Endothelial cell of umbilical vein (primary cell): ENCODE measurements at regions of chr16 and their contacts with region 1.

Region 1: DNA sequence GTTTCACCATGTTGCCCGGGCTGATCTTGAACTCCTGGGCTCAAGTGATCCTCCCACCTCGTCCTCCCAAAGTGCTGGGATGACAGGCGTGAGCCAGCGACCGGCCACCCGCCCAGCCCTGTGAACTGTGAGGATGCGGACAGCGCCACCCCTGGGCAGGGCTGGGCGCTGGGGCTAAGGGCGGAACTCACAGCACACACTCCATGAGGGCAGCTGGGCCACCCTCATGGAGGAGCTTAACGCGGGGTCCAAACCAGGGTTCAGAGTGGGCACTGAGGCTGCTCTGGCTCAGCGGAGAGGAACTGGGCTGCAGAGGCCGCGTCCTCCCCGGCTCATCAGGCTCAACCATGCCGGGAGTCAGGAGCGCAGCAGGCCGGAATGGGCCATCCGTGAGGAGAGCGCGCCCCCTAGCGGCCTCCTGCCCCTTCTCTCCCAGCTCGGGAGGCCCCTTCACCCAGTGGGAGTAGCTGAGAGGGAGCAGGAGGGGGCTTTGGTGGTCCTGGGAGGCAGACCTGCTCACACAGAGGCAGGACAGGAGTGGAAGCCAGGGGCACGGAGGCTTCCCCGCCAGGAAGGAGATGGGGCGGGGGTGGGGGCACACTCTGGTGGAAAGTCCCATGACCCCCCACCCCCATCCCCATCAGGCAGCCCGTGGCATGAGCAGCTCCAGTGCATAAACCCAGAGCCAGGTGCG is 13.8 kb downstream of the CORO7 start:
- DNase-seq: peak; percentile 59
- H3K4me3 ChIP-seq: no peak overlapping the region
- H3K27ac ChIP-seq: no peak overlapping the region
- H3K4me1 ChIP-seq: peaks cover 1% of the 10 kb centered on the region
- H3K27me3 ChIP-seq: no peaks in the 10 kb centered on the region
- CTCF ChIP-seq: peak; percentile 88 to 98
- POLR2A ChIP-seq: no peak

Region 2: DNA sequence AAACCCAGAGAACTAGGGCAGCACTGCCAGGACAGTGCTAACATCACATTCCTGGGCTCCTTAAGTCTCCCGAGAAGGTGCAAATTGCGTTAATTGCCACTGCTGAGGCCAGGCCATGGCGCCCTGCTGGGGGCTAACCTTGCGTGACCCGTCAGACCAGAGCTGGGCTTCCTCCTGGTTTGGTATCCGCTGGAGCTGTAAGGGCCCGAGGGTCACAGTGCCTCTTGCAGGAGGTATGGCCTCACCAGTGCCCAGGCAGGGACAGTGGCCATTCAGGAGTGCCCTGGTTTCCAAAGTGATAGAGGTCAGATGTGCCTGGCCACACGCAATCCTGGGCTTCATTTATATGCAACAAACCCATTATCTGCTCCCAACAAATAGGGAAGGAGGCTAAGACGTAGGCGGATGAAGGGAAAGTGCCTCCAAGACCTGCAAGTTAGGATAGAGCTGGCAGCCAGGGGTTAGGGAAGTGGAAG is 268.7 kb before region 1 on chr16:
- CTCF ChIA-PET with region 1: no interaction called
- POLR2A ChIA-PET with region 1: no interaction called
- dilution Hi-C with region 1: no loop called
- intact Hi-C with region 1: no loop called
- DNase-seq: no peak
- H3K4me3 ChIP-seq: no peak overlapping the region
- H3K27ac ChIP-seq: no peak overlapping the region
- H3K4me1 ChIP-seq: no peaks in the 10 kb centered on the region
- H3K27me3 ChIP-seq: peaks cover 0 to 4% of the 10 kb centered on the region in 2 experiments
- CTCF ChIP-seq: no peak
- POLR2A ChIP-seq: no peak

Region 3: GRCh38 chr16:4200000-4200780 is 202.4 kb before region 1 on chr16:
- CTCF ChIA-PET with region 1: interaction called, 40 read pairs
- POLR2A ChIA-PET with region 1: no interaction called
- dilution Hi-C with region 1: no loop called
- intact Hi-C with region 1: loop called (anchors 1 kb)
- DNase-seq: peak; percentile 62
- H3K4me3 ChIP-seq: no peak overlapping the region
- H3K27ac ChIP-seq: no peak overlapping the region
- H3K4me1 ChIP-seq: no peaks in the 10 kb centered on the region
- H3K27me3 ChIP-seq: no peaks in the 10 kb centered on the region
- CTCF ChIP-seq: peak; percentile 46 to 83
- POLR2A ChIP-seq: no peak

Region 4: GRCh38 chr16:4271176-4272066 is 131.2 kb before region 1 on chr16:
- CTCF ChIA-PET with region 1: interaction called, 30 read pairs
- POLR2A ChIA-PET with region 1: no interaction called
- dilution Hi-C with region 1: no loop called
- intact Hi-C with region 1: loop called (anchors 5 kb)
- DNase-seq: peak; percentile 89
- H3K4me3 ChIP-seq: peak overlapping the region; percentile 58 to 89 (median 68)
- H3K27ac ChIP-seq: peak overlapping the region; percentile 51
- H3K4me1 ChIP-seq: peaks cover 15% of the 10 kb centered on the region
- H3K27me3 ChIP-seq: no peaks in the 10 kb centered on the region
- CTCF ChIP-seq: no peak
- POLR2A ChIP-seq: peak; percentile 55

Region 5: DNA sequence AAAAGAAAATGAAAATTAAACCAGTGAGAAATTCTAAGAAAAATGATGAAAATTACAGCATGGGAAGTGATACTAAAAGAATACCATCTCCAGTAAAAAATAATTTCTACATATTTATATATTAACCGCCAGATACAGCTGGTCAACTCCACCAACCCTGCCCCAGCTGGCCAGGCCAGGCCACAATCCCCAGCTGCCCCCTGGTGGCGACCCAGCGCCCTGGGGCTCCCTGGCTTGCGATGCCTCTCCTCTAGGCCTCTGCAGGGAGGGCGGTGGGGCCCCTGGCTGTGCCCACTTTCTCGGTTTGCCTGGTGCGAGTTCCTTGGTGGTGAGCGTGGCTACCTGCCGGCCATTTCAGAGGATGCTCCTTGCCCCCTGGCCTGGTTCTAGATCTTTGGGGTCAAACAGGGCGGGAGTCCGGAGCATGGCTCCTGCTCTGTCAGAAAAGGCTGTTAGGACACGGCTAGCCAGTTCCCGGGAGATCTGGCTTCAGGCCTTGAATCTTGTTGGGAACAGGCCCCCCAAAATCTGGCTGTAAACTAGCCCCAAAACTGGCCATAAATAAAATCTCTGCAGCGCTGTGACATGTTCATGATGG is 72.2 kb before region 1 on chr16:
- CTCF ChIA-PET with region 1: interaction called, 27 read pairs
- POLR2A ChIA-PET with region 1: no interaction called
- dilution Hi-C with region 1: no loop called
- intact Hi-C with region 1: no loop called
- DNase-seq: peak; percentile 58
- H3K4me3 ChIP-seq: no peak overlapping the region
- H3K27ac ChIP-seq: no peak overlapping the region
- H3K4me1 ChIP-seq: peaks cover 23% of the 10 kb centered on the region
- H3K27me3 ChIP-seq: no peaks in the 10 kb centered on the region
- CTCF ChIP-seq: peak; percentile 97 to 99
- POLR2A ChIP-seq: no peak

Region 6: DNA sequence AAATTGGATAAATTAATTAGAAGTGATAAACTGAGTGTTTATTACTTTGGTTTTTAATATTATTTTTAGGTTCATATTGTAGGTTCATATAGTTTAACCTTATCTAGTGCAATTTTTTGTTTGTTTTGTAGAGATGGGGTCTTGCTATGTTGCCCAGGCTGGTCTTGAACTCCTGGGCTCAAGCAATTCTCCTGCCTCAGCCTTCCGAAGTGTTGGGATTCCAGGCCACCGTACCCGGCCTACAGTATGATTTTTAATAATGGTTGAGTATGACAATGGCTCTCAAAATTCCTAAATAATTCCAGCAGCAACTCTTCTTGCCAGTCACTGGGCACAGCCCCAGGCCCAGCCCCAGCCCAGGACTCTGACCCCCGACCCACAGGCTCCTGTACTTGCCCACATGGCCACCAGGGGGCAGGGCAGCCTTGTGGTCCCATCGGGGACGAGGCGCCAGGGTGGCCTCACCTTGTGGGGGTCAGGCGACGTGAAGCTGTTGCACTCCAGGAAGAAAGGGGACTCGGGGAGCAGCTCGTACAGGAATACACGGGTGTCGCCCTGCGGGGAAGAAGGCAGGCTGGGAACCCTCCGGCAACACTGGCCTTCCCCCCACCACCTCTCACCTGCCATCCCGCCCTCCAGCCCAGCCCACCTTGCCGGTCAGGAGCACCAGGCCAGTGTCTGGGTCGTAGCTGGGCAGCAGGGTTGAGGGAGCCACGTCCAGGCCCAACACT is 43.6 kb before region 1 on chr16:
- CTCF ChIA-PET with region 1: interaction called, 102 read pairs
- POLR2A ChIA-PET with region 1: no interaction called
- dilution Hi-C with region 1: no loop called
- intact Hi-C with region 1: loop called (anchors 1 kb)
- DNase-seq: no peak
- H3K4me3 ChIP-seq: no peak overlapping the region
- H3K27ac ChIP-seq: no peak overlapping the region
- H3K4me1 ChIP-seq: no peaks in the 10 kb centered on the region
- H3K27me3 ChIP-seq: no peaks in the 10 kb centered on the region
- CTCF ChIP-seq: peak; percentile 85 to 91
- POLR2A ChIP-seq: no peak

Region 7: DNA sequence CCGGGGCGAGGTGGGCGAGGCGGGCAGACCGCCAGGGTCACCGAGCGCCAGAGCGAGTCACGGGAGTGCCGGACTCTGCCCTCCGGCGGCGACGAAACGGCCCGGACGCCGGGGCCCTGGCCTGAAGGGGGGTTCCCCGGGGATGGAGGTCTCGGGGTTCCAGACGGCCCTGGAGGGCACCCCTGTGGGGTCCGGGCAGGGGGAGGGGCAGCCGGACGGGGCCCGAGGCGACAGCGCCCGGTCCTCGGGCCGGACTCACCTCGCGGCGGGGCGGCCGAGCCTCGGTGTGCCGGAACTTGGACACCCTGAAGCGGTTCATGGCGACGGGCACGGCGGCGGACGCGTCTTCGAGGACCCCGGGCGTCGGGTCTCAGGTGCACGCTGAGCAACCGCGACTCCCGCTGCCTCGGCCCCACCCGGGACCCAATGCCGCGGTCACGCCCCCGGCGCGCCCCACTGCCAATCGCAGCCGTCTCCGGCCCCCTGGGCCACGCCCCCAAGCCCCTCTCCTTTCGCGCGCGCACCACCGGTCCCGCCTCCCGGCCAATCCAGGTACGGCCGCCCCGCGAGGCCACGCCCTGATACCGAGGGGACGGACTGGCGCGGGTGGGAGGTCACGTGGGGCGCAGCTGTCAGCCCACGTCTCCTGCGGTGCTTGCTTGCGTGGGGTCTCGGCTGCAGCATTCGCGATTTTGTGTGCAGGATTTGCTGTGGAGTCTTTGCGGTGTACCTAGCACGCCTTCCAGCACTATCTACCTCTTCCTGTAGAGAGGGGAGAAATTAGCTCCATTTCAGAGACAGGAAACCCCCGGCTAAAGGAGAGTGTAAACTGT is 13.8 kb after region 1 on chr16 and contains the start of gene CORO7:
- CTCF ChIA-PET with region 1: interaction called, 79 read pairs
- POLR2A ChIA-PET with region 1: no interaction called
- dilution Hi-C with region 1: no loop called
- intact Hi-C with region 1: no loop called
- DNase-seq: peak; percentile 93
- H3K4me3 ChIP-seq: peak within 1 kb of the TSS; percentile 55 to 94 (median 71)
- H3K27ac ChIP-seq: peak within 1 kb of the TSS; percentile 57
- H3K4me1 ChIP-seq: peaks cover 9% of the 10 kb centered on the region
- H3K27me3 ChIP-seq: no peaks in the 10 kb centered on the region
- CTCF ChIP-seq: no peak
- POLR2A ChIP-seq: no peak
- total RNA-seq, gene CORO7: 70.4 and 72.3 TPM in 2 replicates